Right cardiac atrium (tissue), 5 donors: ENCODE measurements at regions of chr3 and their contacts with region 1.

Region 1: DNA sequence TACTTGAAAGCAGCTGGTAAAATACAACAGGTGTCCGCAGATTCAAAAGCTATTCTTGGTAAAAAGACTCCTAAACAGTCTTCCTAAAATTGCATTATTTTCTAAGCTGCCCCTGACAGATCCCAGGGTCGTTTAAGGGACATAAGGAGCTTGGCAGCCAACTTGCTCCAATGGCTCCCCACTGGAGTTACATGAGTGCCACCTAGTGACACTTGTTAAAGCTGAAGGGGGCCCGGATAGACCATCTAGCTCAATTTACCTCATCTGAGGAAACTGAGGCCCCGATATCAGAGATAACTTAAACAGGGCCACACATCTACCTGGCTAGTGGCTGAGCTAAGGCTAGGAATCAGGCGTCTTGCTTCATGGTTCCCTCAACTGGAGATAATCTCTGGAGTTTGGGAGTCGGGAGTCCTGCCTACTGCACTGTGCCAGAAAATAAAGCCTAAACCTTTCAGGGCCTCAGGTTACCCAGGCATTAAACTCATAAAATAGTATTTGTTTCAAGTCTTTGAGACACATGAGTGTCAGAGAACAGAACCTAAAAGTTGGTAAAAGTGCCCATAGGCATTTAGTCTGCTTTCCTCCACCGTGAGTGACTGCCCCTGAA is 6.5 kb upstream of the TBC1D23 start:
- DNase-seq: peak; percentile 58 to 69 (median 58)
- ATAC-seq: peak; percentile 91 to 92
- H3K4me3 ChIP-seq: no peak overlapping the region
- H3K27ac ChIP-seq: no peak overlapping the region
- H3K4me1 ChIP-seq: no peaks in the 10 kb centered on the region
- H3K27me3 ChIP-seq: no peaks in the 10 kb centered on the region

Region 2: GRCh38 chr3:99833617-99834205 is 420.6 kb before region 1 on chr3:
- intact Hi-C with region 1: loop called in 3 of 4 experiments (anchors 5 kb)
- DNase-seq: no peak
- ATAC-seq: peak in 1 of 2 donors; percentile 34
- H3K4me3 ChIP-seq: no peak overlapping the region
- H3K27ac ChIP-seq: no peak overlapping the region
- H3K4me1 ChIP-seq: peaks cover 3% of the 10 kb centered on the region
- H3K27me3 ChIP-seq: no peaks in the 10 kb centered on the region

Region 3: DNA sequence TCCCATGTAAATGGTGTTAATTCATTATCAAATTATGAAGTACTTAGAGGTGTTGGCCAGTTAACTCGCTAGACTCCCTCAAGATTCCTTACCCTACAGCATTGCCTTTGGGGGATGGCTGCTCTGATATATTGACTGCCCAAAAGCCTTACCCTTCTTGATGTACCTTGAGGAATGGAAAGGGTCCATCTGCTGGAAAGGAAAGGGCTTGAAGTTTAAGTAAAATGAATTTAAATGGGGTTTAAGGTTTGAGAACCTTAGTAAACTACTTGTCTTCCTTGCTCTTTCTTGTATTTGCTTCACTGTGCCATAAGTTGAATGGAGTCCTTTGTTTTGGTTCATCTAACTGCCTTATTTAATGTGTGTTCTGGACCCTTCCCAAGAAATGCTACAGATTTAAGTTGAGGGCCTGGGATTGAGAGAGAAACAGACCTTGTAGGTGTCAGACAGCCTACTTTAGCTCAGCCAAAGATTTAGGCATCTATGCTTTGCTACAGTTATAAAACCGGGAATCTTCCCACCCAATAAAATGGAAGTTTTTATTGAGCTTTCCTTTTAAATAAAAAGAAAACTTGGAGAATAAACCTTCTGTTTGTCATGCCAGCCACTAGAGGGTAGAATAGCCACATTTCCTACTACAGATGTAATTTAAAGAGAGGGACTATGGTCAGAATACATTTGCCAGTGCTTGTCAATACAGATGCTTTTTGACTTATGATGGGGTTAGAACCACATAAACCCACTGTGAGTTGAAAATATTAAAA is 411.3 kb before region 1 on chr3:
- intact Hi-C with region 1: loop called (anchors 1 to 5 kb)
- DNase-seq: no peak
- ATAC-seq: peak; percentile 80
- H3K4me3 ChIP-seq: no peak overlapping the region
- H3K27ac ChIP-seq: no peak overlapping the region
- H3K4me1 ChIP-seq: peaks cover 6% of the 10 kb centered on the region
- H3K27me3 ChIP-seq: no peaks in the 10 kb centered on the region

Region 4: DNA sequence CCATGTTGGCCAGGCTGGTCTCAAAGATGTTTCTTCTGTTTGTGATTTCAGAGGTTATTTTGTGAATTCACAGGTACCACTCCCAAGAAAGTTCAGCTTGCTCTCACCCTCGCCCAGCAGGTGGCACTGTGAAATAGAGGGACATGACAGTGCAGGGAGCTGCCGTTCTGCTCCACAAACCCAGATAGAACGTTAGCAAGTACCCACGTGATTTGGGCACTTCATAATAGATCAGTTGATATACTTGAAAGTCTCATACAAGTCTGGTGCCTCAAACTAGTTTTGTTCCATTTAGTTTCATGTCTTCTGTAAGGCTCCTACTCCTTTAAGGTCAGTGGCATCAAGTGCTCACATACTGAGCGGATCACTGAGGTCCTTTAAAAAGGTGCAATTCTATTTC is 185.4 kb before region 1 on chr3:
- intact Hi-C with region 1: loop called (anchors 2 to 10 kb)
- DNase-seq: peak; percentile 76 to 89 (median 87)
- ATAC-seq: peak; percentile 85 to 88
- H3K4me3 ChIP-seq: no peak overlapping the region
- H3K27ac ChIP-seq: no peak overlapping the region
- H3K4me1 ChIP-seq: peaks cover 4% of the 10 kb centered on the region
- H3K27me3 ChIP-seq: no peaks in the 10 kb centered on the region

Region 5: DNA sequence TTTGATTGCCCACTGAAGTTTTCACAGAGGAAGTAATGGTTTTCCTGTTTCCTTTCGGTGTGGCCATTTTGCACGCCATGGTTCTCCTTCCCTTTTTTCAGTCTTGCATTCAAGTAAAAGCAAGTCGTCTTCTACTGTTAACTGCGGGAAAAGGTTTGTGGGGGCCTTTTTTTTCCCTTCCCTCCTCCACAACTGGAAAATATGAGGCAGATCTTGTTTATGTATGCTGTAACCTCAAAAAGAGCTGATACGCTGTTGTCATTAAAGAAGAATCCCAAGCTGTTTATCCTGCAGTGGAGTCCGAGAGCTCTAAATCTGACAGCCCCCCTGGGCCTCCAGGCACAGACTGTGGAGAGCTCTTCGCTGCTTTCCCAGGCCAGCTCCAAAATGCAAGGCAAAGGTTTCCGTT is 180.4 kb before region 1 on chr3:
- intact Hi-C with region 1: loop called (anchors 2 to 10 kb)
- DNase-seq: peak; percentile 19 to 65 (median 34)
- ATAC-seq: peak; percentile 37 to 44
- H3K4me3 ChIP-seq: no peak overlapping the region
- H3K27ac ChIP-seq: peak overlapping the region; percentile 64
- H3K4me1 ChIP-seq: peaks cover 10% of the 10 kb centered on the region
- H3K27me3 ChIP-seq: no peaks in the 10 kb centered on the region

Region 6: DNA sequence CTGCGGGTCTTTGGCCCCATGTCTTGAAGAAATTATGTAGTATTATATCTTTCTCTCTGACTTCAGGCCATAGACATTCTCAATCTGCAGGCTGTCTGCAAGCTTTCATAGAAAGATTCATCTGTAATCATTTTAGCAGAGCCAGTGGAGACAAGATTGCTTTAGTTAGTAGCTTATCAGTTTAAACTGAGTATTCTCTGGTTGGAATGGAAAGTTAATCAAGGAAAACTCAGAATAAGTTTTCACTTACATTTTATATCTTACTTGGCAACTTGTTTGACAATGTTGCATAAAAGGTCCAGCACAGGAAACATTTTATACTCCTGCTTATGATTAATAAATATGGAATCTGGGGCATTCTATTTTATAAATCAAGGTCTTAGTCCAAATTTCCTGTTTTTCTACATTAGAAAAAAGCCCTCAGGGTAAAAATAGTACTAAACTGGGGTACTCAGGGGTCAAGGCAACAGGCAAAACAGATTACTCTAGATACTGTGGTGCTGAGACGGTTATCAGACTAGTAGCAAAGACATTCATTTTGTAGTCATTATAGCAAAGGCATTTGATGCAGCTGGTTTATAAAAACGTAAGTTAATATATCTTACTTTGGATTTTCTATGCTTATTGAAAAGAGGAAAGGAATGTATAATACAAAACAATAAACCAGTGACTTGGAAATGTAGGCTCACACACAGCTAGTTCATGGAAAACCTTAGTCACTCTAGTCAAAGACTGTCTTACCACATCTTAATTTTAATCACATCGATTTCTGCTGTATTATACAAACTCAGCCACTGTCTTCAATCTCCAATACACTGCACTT is 94.7 kb before region 1 on chr3:
- intact Hi-C with region 1: loop called in 1 of 4 experiments (anchors 10 kb)
- DNase-seq: no peak
- ATAC-seq: no peak
- H3K4me3 ChIP-seq: no peak overlapping the region
- H3K27ac ChIP-seq: no peak overlapping the region
- H3K4me1 ChIP-seq: peaks cover 2% of the 10 kb centered on the region
- H3K27me3 ChIP-seq: no peaks in the 10 kb centered on the region